Activated naive CD4-positive, alpha-beta T cell treated with anti-CD3 and anti-CD28 coated beads, Interleukin-2, amount 10 ng/mL, durations not matched to agents 7 days and 5 days (primary cell): ENCODE measurements at regions of chr17 and their contacts with region 1.

Region 1: DNA sequence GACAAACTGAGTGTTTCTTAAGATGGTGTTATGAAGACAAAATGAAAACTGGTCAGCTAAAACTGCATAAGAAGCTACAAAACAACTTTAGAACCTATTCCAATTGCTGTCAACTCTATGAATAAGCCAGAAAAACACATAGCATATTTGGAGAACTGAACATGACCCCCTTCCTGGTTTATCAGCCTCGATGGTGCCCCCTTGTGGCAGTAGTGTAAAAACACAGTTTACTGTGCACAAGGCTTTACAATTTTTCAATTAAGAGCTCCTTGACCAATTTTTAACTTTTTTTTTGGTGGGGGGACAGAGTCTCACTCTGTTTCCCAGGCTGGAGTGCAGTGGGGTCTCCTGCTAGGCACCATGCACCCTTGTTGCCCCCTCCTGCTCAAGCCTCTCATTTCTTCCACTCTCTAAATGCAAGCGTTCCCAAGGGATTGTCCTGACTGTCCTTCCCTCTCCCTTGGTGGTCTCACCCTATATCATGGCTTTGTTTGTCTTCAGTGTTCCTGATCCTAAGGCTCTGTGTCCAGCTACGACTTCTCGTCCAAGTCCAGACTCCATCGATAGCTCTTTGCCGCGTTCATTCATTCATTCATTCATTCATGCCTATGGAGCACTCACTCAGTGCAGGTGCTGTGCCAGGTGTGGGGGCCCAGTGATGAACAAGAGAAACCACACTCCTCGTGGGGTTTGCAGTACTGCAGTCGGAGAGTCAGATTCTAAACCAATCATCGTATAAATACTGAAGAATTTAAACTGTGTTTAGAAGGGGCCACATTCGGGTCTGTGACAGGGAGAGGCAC is 7.5 kb downstream of the EIF1 start:
- DNase-seq: peak; percentile 86
- H3K4me3 Mint-ChIP-seq: no peak overlapping the region
- H3K27ac Mint-ChIP-seq: peak overlapping the region; percentile 81
- H3K4me1 Mint-ChIP-seq: peaks cover 29% of the 10 kb centered on the region
- H3K27me3 Mint-ChIP-seq: peaks cover 4% of the 10 kb centered on the region

Region 2: DNA sequence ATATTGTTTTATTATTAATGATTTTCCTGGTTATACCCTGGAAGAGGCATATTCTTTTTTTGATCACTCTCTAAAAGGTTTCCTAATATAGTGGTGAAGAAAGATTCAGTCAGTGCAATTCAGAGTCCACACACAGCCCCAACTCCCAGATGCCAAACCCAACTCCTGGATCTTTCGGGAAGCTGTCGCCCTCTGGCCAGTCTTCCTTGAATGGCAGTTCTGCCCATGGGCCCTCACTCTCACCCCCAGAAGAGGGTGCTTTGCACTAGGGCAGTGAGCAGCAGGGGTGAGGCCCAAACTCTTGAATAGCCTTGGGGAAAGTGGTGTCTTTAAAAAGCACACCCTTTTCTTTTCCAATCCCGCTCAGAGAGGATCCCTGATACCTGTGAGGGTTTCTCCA is 239.9 kb before region 1 on chr17:
- CTCF ChIA-PET with region 1: no interaction called
- DNase-seq: no peak
- H3K4me3 Mint-ChIP-seq: no peak overlapping the region
- H3K27ac Mint-ChIP-seq: no peak overlapping the region
- H3K4me1 Mint-ChIP-seq: no peaks in the 10 kb centered on the region
- H3K27me3 Mint-ChIP-seq: peaks cover 24% of the 10 kb centered on the region

Region 3: GRCh38 chr17:41654133-41654907 is 41.8 kb before region 1 on chr17:
- CTCF ChIA-PET with region 1: no interaction called
- DNase-seq: no peak
- H3K4me3 Mint-ChIP-seq: no peak overlapping the region
- H3K27ac Mint-ChIP-seq: no peak overlapping the region
- H3K4me1 Mint-ChIP-seq: no peaks in the 10 kb centered on the region
- H3K27me3 Mint-ChIP-seq: peaks cover 13% of the 10 kb centered on the region

Region 4: DNA sequence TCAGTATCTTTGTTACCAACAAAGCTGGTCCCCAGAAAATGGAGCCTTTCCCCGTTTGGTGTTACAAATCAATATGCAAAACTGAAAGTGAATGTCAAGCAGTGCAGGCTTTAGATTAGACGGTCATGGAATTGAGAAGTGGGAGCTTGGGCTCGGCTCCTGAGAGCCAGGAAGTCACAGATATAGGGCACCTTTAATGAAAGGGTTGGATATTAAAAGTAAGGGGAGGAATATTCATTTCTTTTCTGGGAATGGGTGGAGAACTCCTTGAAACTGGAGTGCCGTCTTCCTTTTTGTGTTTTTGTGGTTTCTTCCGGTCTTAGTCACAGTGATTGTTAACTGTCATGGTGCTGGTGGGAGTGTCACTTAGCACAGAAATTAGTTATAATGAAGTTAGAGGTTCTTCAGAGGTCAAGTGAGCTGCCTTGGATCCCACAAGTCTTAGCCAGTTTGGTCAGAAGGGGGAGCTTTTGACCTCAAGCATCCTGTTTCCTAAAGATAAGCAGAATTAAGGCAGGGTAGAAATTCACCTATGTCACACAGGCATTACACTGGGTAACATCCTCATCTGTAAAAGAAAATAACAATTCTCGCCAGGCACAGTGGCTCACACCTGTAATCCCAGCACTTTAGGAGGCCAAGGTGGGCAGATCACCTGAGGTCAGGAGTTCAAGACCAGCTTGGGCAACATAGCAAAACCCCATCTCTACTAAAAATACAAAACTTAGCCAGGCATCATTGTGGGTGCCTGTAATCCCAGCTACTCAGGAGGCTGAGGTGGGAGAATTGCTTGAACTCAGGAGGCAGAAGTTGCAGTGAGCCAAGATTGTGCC is 17.0 kb before region 1 on chr17:
- CTCF ChIA-PET with region 1: interaction called, 72 read pairs
- DNase-seq: peak; percentile 85
- H3K4me3 Mint-ChIP-seq: peak overlapping the region; percentile 86
- H3K27ac Mint-ChIP-seq: peak overlapping the region; percentile 98
- H3K4me1 Mint-ChIP-seq: peaks cover 64% of the 10 kb centered on the region
- H3K27me3 Mint-ChIP-seq: peaks cover 13% of the 10 kb centered on the region

Region 5: GRCh38 chr17:41710468-41711090 is 14.4 kb after region 1 on chr17:
- CTCF ChIA-PET with region 1: interaction called, 13 read pairs
- DNase-seq: no peak
- H3K4me3 Mint-ChIP-seq: no peak overlapping the region
- H3K27ac Mint-ChIP-seq: no peak overlapping the region
- H3K4me1 Mint-ChIP-seq: no peaks in the 10 kb centered on the region
- H3K27me3 Mint-ChIP-seq: peaks cover 61% of the 10 kb centered on the region